CD8-positive, alpha-beta T cell (primary cell): ENCODE measurements at regions of chr3 and their contacts with region 1.

Region 1: GRCh38 chr3:141845407-141846049 is 30.9 kb upstream of the ATP1B3 start:
- DNase-seq: peak in 8 of 9 experiments; percentile 12 to 68 (median 50)
- ATAC-seq: peak; percentile 81
- H3K4me3 ChIP-seq: no peak overlapping the region
- H3K4me3 Mint-ChIP-seq: no peak overlapping the region
- H3K27ac ChIP-seq: no peak overlapping the region
- H3K27ac Mint-ChIP-seq: peak overlapping the region; percentile 22
- H3K4me1 ChIP-seq: peaks cover 6% of the 10 kb centered on the region
- H3K4me1 Mint-ChIP-seq: peaks cover 7% of the 10 kb centered on the region
- H3K27me3 ChIP-seq: peaks cover 0 to 3% of the 10 kb centered on the region in 2 experiments
- H3K27me3 Mint-ChIP-seq: peaks cover 3% of the 10 kb centered on the region
- CTCF ChIP-seq: no peak

Region 2: GRCh38 chr3:141858312-141858711 is 12.8 kb after region 1 on chr3:
- CTCF ChIA-PET with region 1: interaction called, 16 read pairs
- POLR2A ChIA-PET with region 1: interaction called, 3 read pairs
- intact Hi-C with region 1: no loop called
- DNase-seq: no peak
- ATAC-seq: no peak
- H3K4me3 ChIP-seq: no peak overlapping the region
- H3K4me3 Mint-ChIP-seq: no peak overlapping the region
- H3K27ac ChIP-seq: no peak overlapping the region
- H3K27ac Mint-ChIP-seq: no peak overlapping the region
- H3K4me1 ChIP-seq: no peaks in the 10 kb centered on the region
- H3K4me1 Mint-ChIP-seq: no peaks in the 10 kb centered on the region
- H3K27me3 ChIP-seq: no peaks in the 10 kb centered on the region
- H3K27me3 Mint-ChIP-seq: peaks cover 2% of the 10 kb centered on the region
- CTCF ChIP-seq: no peak

Region 3: DNA sequence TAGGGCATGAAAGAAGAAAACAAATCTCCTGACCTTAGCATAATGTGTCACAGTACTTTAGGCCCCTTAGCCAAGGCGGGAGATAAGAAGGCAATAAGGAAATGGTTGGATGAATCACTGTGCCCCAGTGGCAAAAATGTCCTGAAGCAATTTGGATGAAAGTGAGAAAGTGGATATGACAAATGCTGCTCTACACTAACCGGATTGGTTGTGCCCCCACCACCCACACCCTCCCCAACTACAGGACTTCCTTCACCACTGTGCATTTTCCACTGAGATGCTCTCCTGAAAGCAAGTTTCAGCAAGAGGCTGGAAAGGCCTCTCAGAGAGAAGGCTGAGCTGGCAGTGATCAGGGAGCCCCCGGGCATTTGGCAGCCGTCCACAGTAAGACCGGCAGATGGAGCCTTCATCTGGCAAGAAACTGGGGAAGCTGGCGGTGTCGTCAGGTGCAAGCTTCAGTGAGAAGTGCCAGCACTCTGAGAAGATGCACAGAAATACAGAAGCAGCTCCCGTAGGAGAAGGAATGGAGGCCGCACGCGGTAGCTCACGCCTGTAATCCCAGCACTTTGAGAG is 94.8 kb after region 1 on chr3:
- CTCF ChIA-PET with region 1: no interaction called
- POLR2A ChIA-PET with region 1: no interaction called
- intact Hi-C with region 1: no loop called
- DNase-seq: no peak
- ATAC-seq: no peak
- H3K4me3 ChIP-seq: no peak overlapping the region
- H3K4me3 Mint-ChIP-seq: no peak overlapping the region
- H3K27ac ChIP-seq: no peak overlapping the region
- H3K27ac Mint-ChIP-seq: no peak overlapping the region
- H3K4me1 ChIP-seq: no peaks in the 10 kb centered on the region
- H3K4me1 Mint-ChIP-seq: no peaks in the 10 kb centered on the region
- H3K27me3 ChIP-seq: no peaks in the 10 kb centered on the region
- H3K27me3 Mint-ChIP-seq: no peaks in the 10 kb centered on the region
- CTCF ChIP-seq: no peak

Region 4: GRCh38 chr3:141959921-141960554 is 114.5 kb after region 1 on chr3:
- CTCF ChIA-PET with region 1: no interaction called
- POLR2A ChIA-PET with region 1: no interaction called
- intact Hi-C with region 1: no loop called
- DNase-seq: no peak
- ATAC-seq: no peak
- H3K4me3 ChIP-seq: no peak overlapping the region
- H3K4me3 Mint-ChIP-seq: no peak overlapping the region
- H3K27ac ChIP-seq: no peak overlapping the region
- H3K27ac Mint-ChIP-seq: no peak overlapping the region
- H3K4me1 ChIP-seq: no peaks in the 10 kb centered on the region
- H3K4me1 Mint-ChIP-seq: peaks cover 4% of the 10 kb centered on the region
- H3K27me3 ChIP-seq: no peaks in the 10 kb centered on the region
- H3K27me3 Mint-ChIP-seq: no peaks in the 10 kb centered on the region
- CTCF ChIP-seq: no peak